ENCODE measurements at regions of chr6 and their contacts with region 1.

Region 1: DNA sequence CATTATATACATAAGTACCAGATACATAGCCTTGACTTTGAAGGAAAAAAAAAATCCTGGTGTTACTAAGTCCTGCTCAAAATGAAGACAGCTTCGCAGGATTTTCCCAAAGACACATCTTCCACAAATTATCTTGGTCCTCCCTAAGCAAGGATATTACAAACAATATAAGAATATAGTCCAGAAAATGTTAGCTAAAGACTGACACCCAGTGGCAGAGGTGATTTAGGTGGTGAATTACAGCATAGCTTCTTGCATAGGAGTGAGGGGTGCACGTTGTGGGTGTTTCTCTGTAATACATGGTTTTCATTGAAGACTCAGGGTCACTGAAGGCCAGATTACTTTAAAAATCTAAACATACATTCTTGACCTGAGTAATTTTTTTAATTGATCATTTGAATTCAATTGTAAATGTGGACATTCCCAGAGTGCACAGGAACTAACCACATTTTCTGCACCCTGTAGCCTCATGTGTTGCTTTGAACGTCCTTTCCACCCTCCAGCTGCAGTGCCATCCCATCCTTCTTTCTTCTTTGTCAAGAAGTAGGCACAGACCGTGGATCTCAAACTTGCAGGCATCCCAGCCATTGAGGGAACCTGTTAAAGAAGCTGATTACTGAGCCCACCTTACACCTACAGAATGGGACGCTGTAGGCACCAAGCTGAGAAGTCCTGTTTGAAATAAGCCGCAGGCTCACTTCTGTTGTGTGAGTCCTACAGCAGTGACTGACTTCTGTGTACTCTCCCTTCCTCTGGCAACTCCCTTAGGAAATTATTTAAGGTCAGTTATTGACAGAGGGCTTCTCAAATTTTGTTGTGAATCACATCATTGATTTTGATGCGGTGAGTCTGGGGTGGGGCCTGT is 102.6 kb downstream of the PERP start:
- DNase-seq: no peak
- ATAC-seq: peak in 2 of 4 donors; percentile 49 to 67
- H3K4me3 ChIP-seq: no peak overlapping the region
- H3K27ac ChIP-seq: no peak overlapping the region
- H3K4me1 ChIP-seq: no peaks in the 10 kb centered on the region
- H3K27me3 ChIP-seq: no peaks in the 10 kb centered on the region
- CTCF ChIP-seq: peak in 2 of 4 donors; percentile 19 to 21

Region 2: DNA sequence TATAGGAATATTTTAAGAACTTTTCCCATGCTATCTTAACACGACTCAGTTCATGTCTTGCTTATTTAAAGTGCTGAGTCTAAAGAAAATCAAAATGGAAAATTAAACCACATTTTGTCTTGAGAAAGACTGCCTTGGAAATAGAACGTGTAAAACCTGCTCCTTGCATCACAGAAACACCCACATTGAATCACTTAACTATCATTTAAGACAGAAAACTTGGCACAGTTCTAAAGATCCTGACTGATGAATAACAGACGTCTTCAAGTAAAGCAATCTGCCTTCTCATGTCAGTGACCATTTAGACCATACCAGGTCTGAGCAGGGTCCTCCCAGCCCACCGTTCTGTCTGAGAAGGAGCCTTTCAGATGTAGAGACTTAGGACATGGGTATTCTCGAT is 95.2 kb after region 1 on chr6:
- intact Hi-C with region 1: loop called in 1 of 3 experiments (anchors 5 kb)
- DNase-seq: no peak
- ATAC-seq: peak in 1 of 4 donors; percentile 18
- H3K4me3 ChIP-seq: no peak overlapping the region
- H3K27ac ChIP-seq: no peak overlapping the region
- H3K4me1 ChIP-seq: peaks cover 0 to 6% (median 3%) of the 10 kb centered on the region in 3 donors
- H3K27me3 ChIP-seq: no peaks in the 10 kb centered on the region
- CTCF ChIP-seq: no peak